Activated naive CD4-positive, alpha-beta T cell treated with anti-CD3 and anti-CD28 coated beads for 36 hours (primary cell): ENCODE measurements at regions of chr22 and their contacts with region 1.

Region 1: GRCh38 chr22:21938071-21938822 is 14.4 kb downstream of the PPM1F start:
- DNase-seq: peak; percentile 92
- H3K4me3 Mint-ChIP-seq: peak overlapping the region; percentile 64
- H3K27ac Mint-ChIP-seq: peak overlapping the region; percentile 64
- H3K4me1 Mint-ChIP-seq: peaks cover 40% of the 10 kb centered on the region
- H3K27me3 Mint-ChIP-seq: no peaks in the 10 kb centered on the region

Region 2: DNA sequence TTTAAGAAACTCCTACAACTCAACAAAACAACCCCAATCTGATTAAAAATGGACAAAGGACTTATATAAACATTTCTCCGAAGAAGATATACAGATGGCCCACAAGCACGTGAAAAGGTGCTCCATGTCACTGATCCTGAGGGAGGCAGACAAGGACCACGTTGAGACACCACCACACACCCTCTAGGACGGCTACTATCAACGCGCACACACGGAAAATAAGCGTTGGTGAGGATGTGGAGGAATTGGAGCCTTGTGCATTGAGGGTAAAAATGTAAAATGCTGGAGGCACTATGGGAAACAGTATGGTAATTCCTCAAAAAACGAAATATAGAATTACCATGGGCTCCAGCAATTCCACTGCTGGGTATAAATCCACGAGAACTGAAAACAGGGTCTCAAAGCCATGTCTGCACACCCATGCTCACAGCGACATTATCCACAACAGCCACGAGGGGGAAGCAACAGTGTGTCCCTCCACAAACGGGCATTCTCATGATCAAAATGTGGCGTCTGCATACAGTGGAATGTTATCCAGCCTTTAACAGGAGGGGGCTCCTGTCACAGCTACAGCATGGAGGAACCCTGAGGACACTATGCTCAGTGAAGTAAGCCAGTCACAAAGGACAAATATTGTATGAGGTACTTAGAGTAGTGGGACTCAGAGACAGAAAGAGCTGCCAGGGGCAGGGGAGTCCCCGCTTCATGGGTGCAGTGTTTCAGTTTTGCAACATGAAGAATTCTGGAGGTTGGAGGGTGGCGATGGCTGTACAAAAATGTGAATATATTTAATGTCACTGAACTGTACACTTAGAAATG is 225.1 kb before region 1 on chr22:
- CTCF ChIA-PET with region 1: interaction called, 11 read pairs
- intact Hi-C with region 1: loop called (anchors 1 kb)
- DNase-seq: peak; percentile 70
- H3K4me3 Mint-ChIP-seq: no peak overlapping the region
- H3K27ac Mint-ChIP-seq: no peak overlapping the region
- H3K4me1 Mint-ChIP-seq: peaks cover 9% of the 10 kb centered on the region
- H3K27me3 Mint-ChIP-seq: no peaks in the 10 kb centered on the region

Region 3: DNA sequence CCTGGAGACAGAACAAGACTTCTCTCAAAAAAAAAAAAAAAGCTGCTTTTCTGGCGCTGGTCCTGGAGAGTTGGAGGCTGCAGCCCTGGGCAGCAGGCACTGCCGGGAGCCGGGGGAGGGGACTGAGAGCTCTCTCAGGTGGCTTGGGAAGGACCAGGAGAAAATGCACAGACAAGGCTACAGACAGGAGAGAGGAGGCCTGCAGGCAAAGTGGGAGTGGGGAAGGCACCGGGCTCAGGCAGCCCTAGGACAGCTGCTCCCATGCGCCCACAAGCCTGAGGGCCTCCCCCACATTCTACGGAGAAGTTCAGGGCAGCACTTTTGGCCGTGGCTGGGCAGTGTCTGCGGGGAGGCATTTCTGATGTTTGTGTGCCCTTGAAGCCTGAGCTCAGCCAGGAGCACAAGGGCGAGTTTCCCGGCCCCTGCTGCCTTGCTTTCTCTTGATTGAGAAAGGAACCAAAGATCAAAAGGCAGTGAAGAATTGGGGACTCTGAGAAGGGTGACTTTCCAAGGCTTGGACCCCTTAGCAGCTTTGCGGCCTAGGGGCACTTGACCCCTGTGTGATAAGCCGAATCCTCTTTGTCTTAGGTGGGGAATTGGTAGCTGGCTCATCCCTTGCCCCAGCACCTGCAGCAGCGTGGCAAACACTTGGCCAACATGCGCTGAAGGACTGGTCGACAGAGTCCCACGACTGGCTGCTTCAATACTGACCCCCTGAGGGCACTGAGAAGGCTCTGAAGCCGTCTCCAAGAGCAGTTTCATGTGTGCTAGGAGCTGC is 20.9 kb before region 1 on chr22:
- CTCF ChIA-PET with region 1: interaction called, 10 read pairs
- intact Hi-C with region 1: no loop called
- DNase-seq: no peak
- H3K4me3 Mint-ChIP-seq: no peak overlapping the region
- H3K27ac Mint-ChIP-seq: no peak overlapping the region
- H3K4me1 Mint-ChIP-seq: no peaks in the 10 kb centered on the region
- H3K27me3 Mint-ChIP-seq: no peaks in the 10 kb centered on the region

Region 4: DNA sequence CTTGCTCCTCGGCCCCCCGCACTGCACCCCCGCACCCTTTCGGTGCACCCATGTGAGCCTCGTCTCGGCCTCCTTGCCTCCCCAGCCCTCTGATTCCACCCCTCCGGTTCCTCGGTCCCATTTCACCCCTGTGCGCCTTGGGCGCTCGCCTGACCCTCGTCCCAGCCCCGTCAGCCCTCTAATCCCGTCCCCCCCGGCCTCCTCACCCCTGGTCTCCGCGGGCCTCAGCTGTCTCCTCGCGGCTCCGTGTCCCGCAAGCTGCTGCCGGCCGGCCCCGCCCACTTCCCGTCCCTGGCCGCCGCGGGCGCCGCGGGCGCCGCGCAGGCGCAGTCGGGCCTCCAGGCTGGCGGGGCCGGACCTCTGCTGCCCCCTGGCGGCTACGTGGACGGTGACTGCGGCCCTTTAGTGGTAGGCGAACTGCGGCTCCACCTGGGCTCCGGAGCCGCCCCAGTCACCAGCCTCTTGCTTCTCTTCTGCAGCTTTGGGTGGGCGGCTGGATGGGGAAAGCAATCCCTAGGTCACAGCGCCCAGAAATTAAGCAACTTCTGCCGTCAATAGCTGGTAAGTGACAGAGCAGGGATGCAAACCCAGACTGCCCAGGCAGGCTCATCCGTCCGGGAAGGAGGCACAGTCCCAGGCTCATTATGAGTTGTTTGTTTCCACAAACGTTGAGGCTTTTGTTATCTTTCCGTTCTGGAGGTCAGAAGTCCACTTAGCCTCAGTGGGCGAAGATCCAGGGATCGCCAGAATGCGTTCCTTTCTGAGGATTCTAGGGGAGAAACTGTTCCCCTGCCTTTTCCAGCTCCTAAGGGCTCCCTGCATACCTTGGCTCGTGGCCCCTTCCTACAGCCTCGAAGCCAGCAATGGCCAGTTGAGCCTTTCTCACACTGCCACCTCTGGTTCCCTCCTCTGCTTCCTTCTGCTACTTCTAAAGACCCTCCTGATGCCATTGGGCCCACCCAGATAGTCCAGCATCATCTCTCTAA is 14.6 kb after region 1 on chr22 and contains the start of gene PPM1F:
- CTCF ChIA-PET with region 1: interaction called, 90 read pairs
- intact Hi-C with region 1: loop called (anchors 2 kb)
- DNase-seq: peak; percentile 88
- H3K4me3 Mint-ChIP-seq: peak within 1 kb of the TSS; percentile 88
- H3K27ac Mint-ChIP-seq: no peak within 1 kb of the TSS
- H3K4me1 Mint-ChIP-seq: peaks cover 11% of the 10 kb centered on the region
- H3K27me3 Mint-ChIP-seq: no peaks in the 10 kb centered on the region
- total RNA-seq, gene PPM1F: 23.0 to 24.3 TPM

Region 5: GRCh38 chr22:22110548-22111266 is 172.5 kb after region 1 on chr22:
- CTCF ChIA-PET with region 1: no interaction called
- intact Hi-C with region 1: no loop called
- DNase-seq: peak; percentile 65
- H3K4me3 Mint-ChIP-seq: no peak overlapping the region
- H3K27ac Mint-ChIP-seq: no peak overlapping the region
- H3K4me1 Mint-ChIP-seq: peaks cover 13% of the 10 kb centered on the region
- H3K27me3 Mint-ChIP-seq: no peaks in the 10 kb centered on the region